Activated CD4-positive, alpha-beta T cell treated with anti-CD3 and anti-CD28 coated beads, Interleukin-2, amount 10 ng/mL, durations not matched to agents 24 days and 14 days (primary cell): ENCODE measurements at regions of chr21 and their contacts with region 1.

Region 1: GRCh38 chr21:23853796-23854379 is 1753.4 kb downstream of the MRPL39 start:
- DNase-seq: peak; percentile 70
- H3K4me3 Mint-ChIP-seq: no peak overlapping the region
- H3K27ac Mint-ChIP-seq: no peak overlapping the region
- H3K4me1 Mint-ChIP-seq: peaks cover 5% of the 10 kb centered on the region
- H3K27me3 Mint-ChIP-seq: peaks cover 8% of the 10 kb centered on the region

Region 2: GRCh38 chr21:23127973-23128372 is 725.9 kb before region 1 on chr21:
- intact Hi-C with region 1: no loop called
- DNase-seq: no peak
- H3K4me3 Mint-ChIP-seq: no peak overlapping the region
- H3K27ac Mint-ChIP-seq: no peak overlapping the region
- H3K4me1 Mint-ChIP-seq: no peaks in the 10 kb centered on the region
- H3K27me3 Mint-ChIP-seq: no peaks in the 10 kb centered on the region

Region 3: DNA sequence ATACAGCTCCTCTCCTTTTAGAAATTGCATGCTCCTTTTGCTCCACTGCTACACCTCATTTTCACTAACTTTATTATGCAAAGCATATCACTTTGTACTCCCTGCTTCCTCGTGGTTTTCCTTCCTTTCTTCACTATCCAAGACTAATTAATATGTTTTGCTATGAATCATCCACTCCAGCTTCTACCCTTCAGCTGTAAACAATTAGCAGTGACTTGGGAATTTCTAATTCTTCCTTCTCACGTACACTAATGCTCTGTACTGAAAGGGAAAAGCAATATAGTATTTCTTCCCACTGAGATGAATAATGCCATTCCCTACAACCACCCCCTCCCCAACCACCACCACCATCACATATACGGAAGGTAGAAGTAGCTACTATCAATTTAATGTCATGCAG is 163.6 kb before region 1 on chr21:
- intact Hi-C with region 1: no loop called
- DNase-seq: no peak
- H3K4me3 Mint-ChIP-seq: no peak overlapping the region
- H3K27ac Mint-ChIP-seq: no peak overlapping the region
- H3K4me1 Mint-ChIP-seq: no peaks in the 10 kb centered on the region
- H3K27me3 Mint-ChIP-seq: no peaks in the 10 kb centered on the region

Region 4: DNA sequence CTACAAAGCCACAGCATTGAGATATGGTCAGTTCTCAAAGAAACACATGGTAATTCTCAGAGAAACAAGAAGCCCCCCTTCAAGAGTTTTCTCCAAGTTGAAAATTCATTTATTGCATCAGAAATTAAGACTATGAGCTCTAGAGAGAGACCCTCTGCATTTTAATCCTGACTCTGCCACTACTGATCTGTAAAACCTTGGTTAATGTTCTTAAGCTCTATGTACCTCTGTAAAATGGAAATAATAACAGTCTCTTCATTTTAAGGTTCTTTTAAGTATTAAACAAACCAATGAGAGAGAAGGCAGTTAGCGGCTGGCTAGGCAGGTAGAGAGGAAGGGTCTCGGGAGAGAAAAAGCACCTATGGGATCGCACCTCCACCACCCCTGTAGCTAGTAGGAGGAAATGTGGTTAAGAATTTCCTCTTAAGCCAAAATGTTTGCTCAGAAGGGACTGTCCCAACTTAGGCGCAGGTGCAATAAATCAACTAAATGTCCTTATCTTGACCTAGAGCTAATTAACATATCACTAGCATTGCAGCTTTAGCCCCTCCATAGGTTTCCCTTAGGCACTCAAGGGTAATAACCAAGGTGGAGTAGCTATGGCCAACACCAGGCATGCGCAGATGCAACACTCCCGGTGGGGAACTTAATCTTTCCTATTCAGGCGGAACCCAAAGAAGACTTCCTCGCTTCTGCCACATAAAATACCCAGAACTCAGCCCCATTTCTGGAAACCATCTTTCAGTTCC is 68.0 kb after region 1 on chr21:
- intact Hi-C with region 1: no loop called
- DNase-seq: no peak
- H3K4me3 Mint-ChIP-seq: no peak overlapping the region
- H3K27ac Mint-ChIP-seq: no peak overlapping the region
- H3K4me1 Mint-ChIP-seq: peaks cover 12% of the 10 kb centered on the region
- H3K27me3 Mint-ChIP-seq: peaks cover 6% of the 10 kb centered on the region

Region 5: DNA sequence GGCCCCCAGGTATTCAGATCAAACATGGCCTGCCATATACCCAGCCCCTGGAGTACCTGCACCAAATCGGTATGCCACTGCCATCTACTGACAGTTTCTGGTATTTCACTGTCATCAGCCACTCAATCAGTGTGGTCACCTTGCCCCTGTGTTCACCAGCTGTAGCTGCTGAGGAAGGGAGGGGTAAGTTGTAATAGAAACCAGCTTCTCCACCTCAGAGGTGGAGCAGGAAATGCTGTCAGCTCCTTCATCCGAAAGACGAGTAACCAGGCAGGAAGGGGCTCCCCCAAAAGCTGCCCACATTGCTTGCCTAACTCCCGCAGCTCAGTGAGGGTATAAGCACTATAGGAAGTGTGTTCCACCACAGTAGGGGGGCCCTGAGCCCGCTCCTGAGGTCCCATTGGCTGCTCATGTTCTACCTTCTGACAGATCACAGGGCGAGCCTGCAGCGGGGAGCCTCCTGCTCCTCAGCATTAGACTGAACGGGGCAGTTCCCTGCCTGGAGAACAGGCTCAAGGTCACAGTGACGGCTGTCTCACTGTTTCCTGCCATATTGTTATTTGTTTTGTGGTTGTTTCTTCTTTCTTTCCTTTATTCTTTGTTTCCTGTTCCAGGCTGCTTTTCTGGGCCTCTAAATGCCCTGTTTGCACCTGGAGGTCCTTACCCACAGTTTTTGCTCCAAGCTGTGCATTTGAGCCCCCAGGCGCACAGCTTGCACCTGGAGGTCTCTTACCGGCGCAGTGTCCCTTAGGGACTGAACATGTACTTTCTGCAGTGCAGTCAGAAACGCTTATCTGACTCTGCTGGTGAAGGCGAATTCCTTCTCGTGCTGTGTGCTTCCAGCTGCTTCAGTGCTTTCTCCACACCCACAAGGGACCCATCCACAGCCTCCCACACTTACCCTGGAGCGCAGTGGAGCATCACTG is 115.1 kb after region 1 on chr21:
- intact Hi-C with region 1: loop called (anchors 1 kb)
- DNase-seq: peak; percentile 96
- H3K4me3 Mint-ChIP-seq: peak overlapping the region; percentile 67
- H3K27ac Mint-ChIP-seq: peak overlapping the region; percentile 83
- H3K4me1 Mint-ChIP-seq: peaks cover 13% of the 10 kb centered on the region
- H3K27me3 Mint-ChIP-seq: peaks cover 15% of the 10 kb centered on the region

Region 6: GRCh38 chr21:24045775-24046215 is 191.9 kb after region 1 on chr21:
- intact Hi-C with region 1: loop called (anchors 10 kb)
- DNase-seq: peak; percentile 65
- H3K4me3 Mint-ChIP-seq: no peak overlapping the region
- H3K27ac Mint-ChIP-seq: no peak overlapping the region
- H3K4me1 Mint-ChIP-seq: peaks cover 3% of the 10 kb centered on the region
- H3K27me3 Mint-ChIP-seq: no peaks in the 10 kb centered on the region

Region 7: GRCh38 chr21:24514081-24514733 is 660.3 kb after region 1 on chr21:
- intact Hi-C with region 1: loop called (anchors 10 kb)
- DNase-seq: no peak
- H3K4me3 Mint-ChIP-seq: no peak overlapping the region
- H3K27ac Mint-ChIP-seq: no peak overlapping the region
- H3K4me1 Mint-ChIP-seq: no peaks in the 10 kb centered on the region
- H3K27me3 Mint-ChIP-seq: no peaks in the 10 kb centered on the region

Region 8: DNA sequence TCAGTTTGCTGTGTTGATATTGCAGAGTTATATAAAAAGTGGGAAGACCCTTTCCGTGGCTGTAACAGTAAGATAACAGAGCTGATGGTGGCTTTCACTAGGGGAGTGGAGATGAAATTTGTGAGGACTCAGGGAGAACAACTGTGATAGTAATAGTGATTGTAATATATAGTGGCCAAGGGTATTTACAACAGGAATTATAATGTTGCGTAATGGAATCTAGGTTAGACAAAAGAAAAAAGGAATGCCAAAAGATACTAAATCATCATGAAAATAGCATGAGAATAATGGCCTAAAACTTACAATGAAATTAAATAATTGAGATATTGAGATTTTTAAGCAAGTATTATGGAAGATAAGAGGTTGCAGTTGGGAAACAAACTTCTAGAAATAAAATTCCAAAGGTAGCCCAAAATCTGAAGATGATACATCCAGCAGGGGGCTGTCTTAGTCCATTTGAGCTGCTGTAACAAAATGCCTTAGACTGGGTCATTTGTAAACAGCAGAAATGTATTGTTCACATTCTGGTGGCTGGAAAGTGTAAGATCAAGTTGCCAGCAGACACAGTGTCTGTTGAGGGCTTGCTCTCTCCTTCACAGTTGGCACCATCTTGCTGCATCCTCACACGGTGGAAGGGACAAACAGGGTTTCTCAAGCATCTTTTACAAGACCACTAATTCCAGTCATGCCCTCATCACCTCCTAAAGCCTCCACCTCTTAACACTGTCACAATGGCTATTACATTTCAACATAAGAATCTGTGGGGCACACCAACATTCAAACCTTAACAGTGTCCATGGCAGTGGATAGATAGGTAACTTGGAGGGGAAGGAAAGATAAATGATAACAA is 1042.2 kb after region 1 on chr21:
- intact Hi-C with region 1: no loop called
- DNase-seq: no peak
- H3K4me3 Mint-ChIP-seq: no peak overlapping the region
- H3K27ac Mint-ChIP-seq: no peak overlapping the region
- H3K4me1 Mint-ChIP-seq: no peaks in the 10 kb centered on the region
- H3K27me3 Mint-ChIP-seq: no peaks in the 10 kb centered on the region